ENCODE measurements at regions of chr10 and their contacts with region 1.

Region 1: GRCh38 chr10:102713814-102714620 is at the start of gene ARL3:
- DNase-seq: peak; percentile 95
- H3K4me3 Mint-ChIP-seq: peak within 1 kb of the TSS; percentile 88
- H3K27ac Mint-ChIP-seq: peak within 1 kb of the TSS; percentile 91
- H3K4me1 Mint-ChIP-seq: peaks cover 52% of the 10 kb centered on the region
- H3K27me3 Mint-ChIP-seq: no peaks in the 10 kb centered on the region
- total RNA-seq, gene ARL3: 6.6 and 6.8 TPM in 2 replicates

Region 2: GRCh38 chr10:102055647-102056419 is 658.2 kb before region 1 on chr10 and contains the start of gene ARMH3:
- intact Hi-C with region 1: loop called (anchors 5 kb)
- DNase-seq: peak; percentile 90
- H3K4me3 Mint-ChIP-seq: peak within 1 kb of the TSS; percentile 89
- H3K27ac Mint-ChIP-seq: peak within 1 kb of the TSS; percentile 94
- H3K4me1 Mint-ChIP-seq: peaks cover 31% of the 10 kb centered on the region
- H3K27me3 Mint-ChIP-seq: no peaks in the 10 kb centered on the region
- total RNA-seq, gene ARMH3: 21.5 and 24.8 TPM in 2 replicates

Region 3: GRCh38 chr10:102660888-102661657 is 52.9 kb before region 1 on chr10:
- intact Hi-C with region 1: loop called (anchors 1 kb)
- DNase-seq: peak; percentile 65
- H3K4me3 Mint-ChIP-seq: peak overlapping the region; percentile 62
- H3K27ac Mint-ChIP-seq: peak overlapping the region; percentile 88
- H3K4me1 Mint-ChIP-seq: peaks cover 39% of the 10 kb centered on the region
- H3K27me3 Mint-ChIP-seq: peaks cover 2% of the 10 kb centered on the region

Region 4: GRCh38 chr10:102682416-102682815 is 31.6 kb before region 1 on chr10:
- intact Hi-C with region 1: no loop called
- DNase-seq: no peak
- H3K4me3 Mint-ChIP-seq: no peak overlapping the region
- H3K27ac Mint-ChIP-seq: no peak overlapping the region
- H3K4me1 Mint-ChIP-seq: peaks cover 14% of the 10 kb centered on the region
- H3K27me3 Mint-ChIP-seq: no peaks in the 10 kb centered on the region

Region 5: DNA sequence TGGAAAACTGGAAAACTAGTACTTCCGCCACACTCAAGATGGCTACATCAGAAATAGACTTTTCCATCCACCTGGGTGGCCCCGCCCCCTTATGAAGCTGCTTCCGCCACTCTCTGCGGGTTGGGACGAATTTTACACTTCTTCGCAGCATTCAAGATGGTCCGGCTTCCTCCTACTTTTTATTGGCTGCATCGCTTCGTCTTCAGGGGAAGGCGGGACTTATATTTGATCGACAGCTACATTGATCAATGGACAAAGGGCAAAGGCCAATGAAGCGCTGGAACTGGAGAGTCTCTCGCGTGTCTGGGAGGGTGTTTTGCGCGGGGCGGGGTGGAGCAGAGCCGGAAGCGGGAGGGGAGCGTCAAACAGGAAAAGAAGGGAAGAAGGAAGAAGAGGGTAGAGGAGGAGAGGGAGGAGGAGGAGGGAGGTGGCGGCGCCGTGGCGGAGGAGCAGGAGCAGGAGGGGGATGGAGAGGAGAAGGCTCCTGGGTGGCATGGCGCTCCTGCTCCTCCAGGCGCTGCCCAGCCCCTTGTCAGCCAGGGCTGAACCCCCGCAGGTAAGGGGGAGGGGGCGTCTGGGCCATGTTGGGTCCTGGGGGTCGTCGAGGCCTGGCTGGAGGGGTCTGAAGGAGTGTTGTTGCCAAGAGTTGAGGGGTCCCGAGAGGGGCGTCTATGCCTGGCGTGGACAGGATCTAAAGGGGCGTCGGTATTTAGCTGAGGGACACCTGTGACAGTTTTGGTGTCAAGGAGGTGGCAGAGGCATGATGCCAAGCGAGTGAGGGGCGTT is 29.8 kb after region 1 on chr10 and contains the start of gene WBP1L:
- intact Hi-C with region 1: loop called (anchors 1 kb)
- DNase-seq: peak; percentile 94
- H3K4me3 Mint-ChIP-seq: peak within 1 kb of the TSS; percentile 92
- H3K27ac Mint-ChIP-seq: peak within 1 kb of the TSS; percentile 93
- H3K4me1 Mint-ChIP-seq: peaks cover 46% of the 10 kb centered on the region
- H3K27me3 Mint-ChIP-seq: peaks cover 1% of the 10 kb centered on the region
- total RNA-seq, gene WBP1L: 19.4 and 20.0 TPM in 2 replicates

Region 6: GRCh38 chr10:102815790-102816549 is 102.0 kb after region 1 on chr10:
- intact Hi-C with region 1: no loop called
- DNase-seq: no peak
- H3K4me3 Mint-ChIP-seq: no peak overlapping the region
- H3K27ac Mint-ChIP-seq: peak overlapping the region; percentile 15
- H3K4me1 Mint-ChIP-seq: peaks cover 24% of the 10 kb centered on the region
- H3K27me3 Mint-ChIP-seq: no peaks in the 10 kb centered on the region

Region 7: GRCh38 chr10:103192451-103193106 is 478.6 kb after region 1 on chr10:
- intact Hi-C with region 1: loop called (anchors 5 kb)
- DNase-seq: peak; percentile 64
- H3K4me3 Mint-ChIP-seq: peak overlapping the region; percentile 96
- H3K27ac Mint-ChIP-seq: peak overlapping the region; percentile 99
- H3K4me1 Mint-ChIP-seq: peaks cover 45% of the 10 kb centered on the region
- H3K27me3 Mint-ChIP-seq: no peaks in the 10 kb centered on the region

Region 8: DNA sequence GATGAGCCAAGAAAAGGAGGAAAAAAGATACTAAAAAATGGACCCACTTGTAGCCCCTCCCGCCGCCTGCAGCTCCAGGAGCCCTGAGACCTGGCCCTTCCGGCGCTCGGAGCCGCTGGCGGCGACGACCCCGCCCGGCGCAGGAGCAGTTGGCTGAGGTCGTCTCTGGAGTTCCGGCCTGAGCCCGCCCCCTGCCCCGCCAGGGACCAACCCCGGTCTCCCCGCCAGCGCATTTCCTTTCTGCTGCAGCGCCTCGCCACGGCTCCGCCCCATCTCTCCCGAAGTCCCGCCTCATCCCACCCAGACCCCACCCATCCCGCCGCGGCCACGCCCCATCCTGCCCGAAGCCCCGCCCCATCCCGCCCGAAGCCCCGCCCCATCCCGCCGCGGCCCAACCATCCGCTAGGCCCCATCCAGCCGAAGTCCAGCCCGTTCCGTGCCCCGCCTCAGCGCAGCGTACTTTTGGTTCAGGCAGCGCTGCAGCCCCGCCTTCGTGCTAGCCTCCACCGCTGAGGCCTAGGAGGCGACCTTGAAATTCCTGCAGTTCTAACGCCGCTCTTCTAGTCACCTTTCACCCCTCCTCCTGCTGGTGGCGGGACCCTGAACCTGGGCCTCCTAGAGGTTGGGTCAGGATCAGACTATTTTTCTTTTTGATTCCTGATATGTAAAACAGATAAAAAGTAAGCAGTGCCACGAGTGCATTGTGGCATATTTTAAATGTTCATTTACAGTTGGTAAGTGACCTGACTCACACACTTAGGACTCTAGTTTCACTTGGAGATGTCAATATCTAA is 1204.2 kb after region 1 on chr10 and contains the start of gene STN1:
- intact Hi-C with region 1: loop called (anchors 10 kb)
- DNase-seq: peak; percentile 94
- H3K4me3 Mint-ChIP-seq: peak within 1 kb of the TSS; percentile 93
- H3K27ac Mint-ChIP-seq: peak within 1 kb of the TSS; percentile 94
- H3K4me1 Mint-ChIP-seq: peaks cover 36% of the 10 kb centered on the region
- H3K27me3 Mint-ChIP-seq: no peaks in the 10 kb centered on the region
- total RNA-seq, gene STN1: 19.4 and 20.0 TPM in 2 replicates

Measured in activated T-helper 1 cell treated with anti-CD3 and anti-CD28 coated beads, Interleukin-12 subunit alpha, Interleukin-12 subunit beta, Interleukin-2, Interleukin-4 antibody, amounts not matched to agents 30 ng/mL and 10 ng/mL and 1 ng/mL, durations not matched to agents 14 hours and 24 hours and 36 hours (primary cell).